Activated CD4-positive, alpha-beta T cell treated with anti-CD3 and anti-CD28 coated beads for 36 hours (primary cell): ENCODE measurements at regions of chr17 and their contacts with region 1.

Region 1: DNA sequence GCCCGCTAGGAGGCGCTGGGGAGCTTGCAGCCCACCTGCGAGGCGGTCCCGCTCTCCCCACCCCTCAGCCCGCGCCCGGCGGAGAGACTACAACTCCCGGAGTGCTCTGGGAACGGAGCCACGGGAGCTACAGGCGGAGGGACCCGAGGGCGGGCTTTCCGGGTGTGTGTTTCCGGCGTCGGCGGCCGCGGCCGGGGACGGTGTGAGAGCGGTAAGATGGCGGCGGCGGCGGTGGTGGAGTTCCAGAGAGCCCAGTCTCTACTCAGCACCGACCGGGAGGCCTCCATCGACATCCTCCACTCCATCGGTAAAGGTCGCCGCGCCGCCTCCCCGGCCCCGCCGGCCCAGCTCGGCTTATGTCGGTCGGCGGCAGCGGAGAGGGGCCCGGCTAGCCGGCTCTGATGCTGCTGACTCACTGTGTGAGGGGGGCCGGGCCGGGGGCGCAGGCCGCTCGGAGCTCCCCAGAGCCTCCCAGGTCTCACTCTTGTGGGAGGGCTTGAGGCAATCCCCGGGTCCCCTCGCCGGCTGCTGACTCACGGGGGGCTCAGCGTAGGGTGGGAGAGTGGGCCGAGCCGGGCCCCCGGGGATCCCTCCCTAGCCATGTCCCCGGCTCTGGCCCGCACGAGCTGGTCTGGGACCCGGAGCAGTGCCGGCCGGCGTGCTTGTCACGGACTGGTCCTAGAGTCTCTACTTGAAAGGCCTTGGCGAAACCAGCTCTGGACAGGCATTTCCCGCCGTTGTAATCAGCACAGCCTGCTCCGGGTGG is at the start of gene PSMD11:
- DNase-seq: peak; percentile 100
- ATAC-seq: peak; percentile 96
- H3K4me3 Mint-ChIP-seq: peak within 1 kb of the TSS; percentile 82
- H3K27ac Mint-ChIP-seq: peak within 1 kb of the TSS; percentile 95
- H3K4me1 Mint-ChIP-seq: peaks cover 32% of the 10 kb centered on the region
- H3K27me3 Mint-ChIP-seq: peaks cover 2% of the 10 kb centered on the region
- total RNA-seq, gene PSMD11: 109 to 135 TPM

Region 2: GRCh38 chr17:31900877-31901276 is 543.6 kb before region 1 on chr17:
- CTCF ChIA-PET with region 1: interaction called, 3 read pairs
- POLR2A ChIA-PET with region 1: no interaction called
- intact Hi-C with region 1: loop called in 1 of 2 experiments (anchors 1 kb)
- DNase-seq: no peak
- ATAC-seq: no peak
- H3K4me3 Mint-ChIP-seq: no peak overlapping the region
- H3K27ac Mint-ChIP-seq: no peak overlapping the region
- H3K4me1 Mint-ChIP-seq: peaks cover 17% of the 10 kb centered on the region
- H3K27me3 Mint-ChIP-seq: no peaks in the 10 kb centered on the region

Region 3: DNA sequence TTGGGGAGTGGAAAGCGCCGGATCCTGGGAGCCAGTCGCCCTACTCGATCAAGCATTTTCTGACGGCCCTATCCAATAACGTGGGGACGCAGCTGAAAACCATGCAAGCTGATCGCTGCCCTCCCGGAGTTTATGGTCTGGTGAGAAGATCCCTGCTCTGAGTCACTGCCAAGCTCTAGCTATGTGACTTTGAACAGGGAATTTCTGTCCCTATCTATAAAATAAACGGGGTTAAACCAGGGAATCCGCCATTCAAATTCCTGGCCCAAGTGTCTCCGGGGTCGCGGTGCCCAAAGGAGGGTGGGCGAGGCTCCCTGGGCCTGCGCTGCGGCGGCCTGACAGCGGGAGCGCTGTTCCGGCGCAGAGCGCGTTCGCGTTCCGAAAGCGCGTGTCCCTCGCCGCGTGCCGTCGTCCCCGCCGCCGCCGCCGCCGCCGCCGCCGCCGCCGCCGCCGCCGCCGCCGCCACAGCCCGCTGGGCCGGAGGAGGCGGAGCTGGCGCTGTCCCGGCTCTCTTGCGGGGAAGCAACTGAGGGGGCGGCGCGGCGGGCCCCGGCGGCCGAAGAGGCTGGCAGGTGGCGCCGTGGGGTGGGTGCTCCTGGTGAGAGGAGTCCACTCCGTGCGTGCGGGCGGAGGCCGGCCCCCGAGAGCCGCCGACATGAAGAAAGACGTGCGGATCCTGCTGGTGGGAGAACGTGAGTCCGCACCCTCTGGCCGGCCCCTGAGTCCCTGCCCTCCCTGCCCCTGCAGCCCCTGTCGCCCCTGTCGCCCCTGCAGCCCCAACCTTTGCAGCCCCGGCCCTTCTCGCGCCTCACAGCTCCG is 302.2 kb before region 1 on chr17 and contains the start of gene RHOT1:
- CTCF ChIA-PET with region 1: no interaction called
- POLR2A ChIA-PET with region 1: interaction called, 4 read pairs
- intact Hi-C with region 1: loop called in 1 of 2 experiments (anchors 1 kb)
- DNase-seq: peak; percentile 85
- ATAC-seq: peak; percentile 64
- H3K4me3 Mint-ChIP-seq: peak within 1 kb of the TSS; percentile 99
- H3K27ac Mint-ChIP-seq: peak within 1 kb of the TSS; percentile 67
- H3K4me1 Mint-ChIP-seq: peaks cover 27% of the 10 kb centered on the region
- H3K27me3 Mint-ChIP-seq: no peaks in the 10 kb centered on the region
- total RNA-seq, gene RHOT1: 23.3 to 34.1 TPM

Region 4: GRCh38 chr17:32341857-32342602 is 102.5 kb before region 1 on chr17 and contains the start of gene C17orf75:
- CTCF ChIA-PET with region 1: interaction called, 3 read pairs
- POLR2A ChIA-PET with region 1: interaction called, 3 read pairs
- intact Hi-C with region 1: loop called in 1 of 2 experiments (anchors 1 kb)
- DNase-seq: peak; percentile 90
- ATAC-seq: peak; percentile 94
- H3K4me3 Mint-ChIP-seq: peak within 1 kb of the TSS; percentile 88
- H3K27ac Mint-ChIP-seq: peak within 1 kb of the TSS; percentile 96
- H3K4me1 Mint-ChIP-seq: peaks cover 17% of the 10 kb centered on the region
- H3K27me3 Mint-ChIP-seq: no peaks in the 10 kb centered on the region
- total RNA-seq, gene C17orf75: 21.9 to 34.0 TPM

Region 5: GRCh38 chr17:32461853-32462617 is 17.5 kb after region 1 on chr17:
- CTCF ChIA-PET with region 1: interaction called, 102 read pairs
- POLR2A ChIA-PET with region 1: no interaction called
- intact Hi-C with region 1: loop called (anchors 1 to 2 kb)
- DNase-seq: peak; percentile 83
- ATAC-seq: peak; percentile 79
- H3K4me3 Mint-ChIP-seq: no peak overlapping the region
- H3K27ac Mint-ChIP-seq: peak overlapping the region; percentile 56
- H3K4me1 Mint-ChIP-seq: peaks cover 33% of the 10 kb centered on the region
- H3K27me3 Mint-ChIP-seq: no peaks in the 10 kb centered on the region

Region 6: GRCh38 chr17:32609085-32609484 is 164.6 kb after region 1 on chr17:
- CTCF ChIA-PET with region 1: no interaction called
- POLR2A ChIA-PET with region 1: no interaction called
- intact Hi-C with region 1: loop called in 1 of 2 experiments (anchors 1 kb)
- DNase-seq: peak; percentile 88
- ATAC-seq: peak; percentile 100
- H3K4me3 Mint-ChIP-seq: no peak overlapping the region
- H3K27ac Mint-ChIP-seq: no peak overlapping the region
- H3K4me1 Mint-ChIP-seq: peaks cover 8% of the 10 kb centered on the region
- H3K27me3 Mint-ChIP-seq: no peaks in the 10 kb centered on the region